Prostate gland (tissue), 2 donors: ENCODE measurements at regions of chr11 and their contacts with region 1.

Region 1: DNA sequence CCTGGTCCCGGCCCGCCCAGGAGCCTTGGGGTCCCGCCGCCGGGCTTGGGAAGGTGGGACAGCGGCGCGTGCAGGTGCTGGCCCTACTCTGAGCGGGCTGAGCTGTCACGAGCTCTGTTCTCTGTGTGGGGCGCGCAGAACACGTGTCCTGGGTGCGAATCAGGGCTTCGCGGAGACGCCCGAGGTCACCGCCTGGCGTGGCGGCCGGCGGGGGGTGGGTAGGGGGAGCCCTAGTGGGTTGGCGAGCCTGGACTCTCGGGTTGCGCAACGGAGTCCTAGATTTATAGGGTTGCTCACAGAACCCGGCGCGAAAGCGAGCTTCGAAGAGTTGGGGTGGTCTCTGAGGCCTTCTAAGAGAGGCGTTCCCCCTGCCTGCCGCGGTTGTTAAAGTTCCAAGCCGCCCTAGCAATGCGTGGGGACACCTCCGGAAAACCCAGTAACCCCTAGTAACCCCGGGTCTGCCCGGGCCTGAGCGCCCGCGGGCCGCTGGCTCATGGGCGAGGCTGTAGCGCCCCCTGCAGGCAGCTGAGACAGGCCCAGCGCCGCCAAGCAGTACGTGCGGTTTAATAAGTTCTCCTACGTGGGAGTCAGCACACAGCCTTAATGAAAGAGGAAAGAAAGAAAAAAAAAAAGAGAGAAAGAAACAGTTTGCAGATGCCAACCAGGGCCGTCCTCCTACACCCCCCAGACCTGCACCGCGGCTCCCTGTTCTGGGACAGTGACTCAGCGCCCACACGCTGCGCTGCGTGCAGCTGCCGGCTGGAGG is 2.8 kb downstream of the ADM start:
- DNase-seq: peak; percentile 75
- H3K4me3 ChIP-seq: peak overlapping the region; percentile 54 to 58
- H3K27ac ChIP-seq: peak overlapping the region; percentile 95 to 96
- H3K4me1 ChIP-seq: peaks cover 8% of the 10 kb centered on the region
- H3K27me3 ChIP-seq: no peaks in the 10 kb centered on the region
- CTCF ChIP-seq: peak; percentile 97 to 99 (median 98)
- POLR2A ChIP-seq: peak; percentile 50

Region 2: DNA sequence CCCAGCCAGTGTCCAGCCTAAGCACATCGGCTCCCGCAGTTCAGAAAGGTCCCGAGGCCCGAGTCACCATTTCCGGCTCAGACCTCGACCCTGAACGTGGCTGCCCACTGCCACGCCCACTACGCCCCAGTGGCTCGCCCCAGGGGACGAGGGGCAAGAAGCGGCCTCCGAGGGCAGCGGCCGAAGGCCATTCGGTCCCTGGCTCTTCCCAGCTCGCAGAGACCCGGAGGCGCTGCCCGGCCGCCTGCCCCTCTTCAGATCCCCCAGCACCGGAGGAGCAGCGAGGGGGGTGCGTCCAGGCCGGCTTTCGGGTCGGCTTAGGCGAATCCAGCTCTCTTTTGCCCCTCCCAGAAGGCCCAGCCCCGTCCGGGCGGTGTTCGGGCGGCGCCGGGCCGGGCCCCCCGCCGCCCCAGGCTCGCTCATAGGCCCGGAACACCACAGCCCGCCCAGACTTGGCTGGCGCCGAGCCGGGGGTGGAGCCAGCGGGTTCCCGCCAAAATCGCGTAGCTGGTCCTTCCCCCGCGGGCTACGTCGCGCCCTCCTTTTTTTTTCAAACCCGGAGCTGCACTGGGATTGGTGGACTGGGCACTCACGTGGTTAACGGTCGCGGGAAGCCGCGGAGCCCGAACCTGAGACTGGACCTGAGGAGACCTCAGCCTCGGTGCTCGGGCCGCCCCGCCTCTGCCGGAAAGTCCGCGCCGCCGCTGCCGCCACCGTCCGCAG is 734.4 kb before region 1 on chr11 and contains the start of gene WEE1:
- intact Hi-C with region 1: loop called (anchors 10 kb)
- DNase-seq: peak; percentile 98
- H3K4me3 ChIP-seq: peak within 1 kb of the TSS; percentile 77
- H3K27ac ChIP-seq: peak within 1 kb of the TSS; percentile 93 to 99
- H3K4me1 ChIP-seq: peaks cover 8% of the 10 kb centered on the region
- H3K27me3 ChIP-seq: no peaks in the 10 kb centered on the region
- CTCF ChIP-seq: no peak
- POLR2A ChIP-seq: peak; percentile 92
- total RNA-seq, gene WEE1: 31.0 to 33.1 TPM

Region 3: GRCh38 chr11:9861860-9862725 is 445.5 kb before region 1 on chr11:
- intact Hi-C with region 1: no loop called
- DNase-seq: peak; percentile 34
- H3K4me3 ChIP-seq: no peak overlapping the region
- H3K27ac ChIP-seq: no peak overlapping the region
- H3K4me1 ChIP-seq: peaks cover 4% of the 10 kb centered on the region
- H3K27me3 ChIP-seq: no peaks in the 10 kb centered on the region
- CTCF ChIP-seq: peak in 3 of 4 experiments; percentile 42 to 55 (median 51)
- POLR2A ChIP-seq: no peak

Region 4: GRCh38 chr11:9972989-9973388 is 334.6 kb before region 1 on chr11:
- intact Hi-C with region 1: loop called (anchors 10 kb)
- DNase-seq: peak; percentile 38
- H3K4me3 ChIP-seq: no peak overlapping the region
- H3K27ac ChIP-seq: no peak overlapping the region
- H3K4me1 ChIP-seq: no peaks in the 10 kb centered on the region
- H3K27me3 ChIP-seq: no peaks in the 10 kb centered on the region
- CTCF ChIP-seq: peak; percentile 23 to 86 (median 68)
- POLR2A ChIP-seq: no peak

Region 5: DNA sequence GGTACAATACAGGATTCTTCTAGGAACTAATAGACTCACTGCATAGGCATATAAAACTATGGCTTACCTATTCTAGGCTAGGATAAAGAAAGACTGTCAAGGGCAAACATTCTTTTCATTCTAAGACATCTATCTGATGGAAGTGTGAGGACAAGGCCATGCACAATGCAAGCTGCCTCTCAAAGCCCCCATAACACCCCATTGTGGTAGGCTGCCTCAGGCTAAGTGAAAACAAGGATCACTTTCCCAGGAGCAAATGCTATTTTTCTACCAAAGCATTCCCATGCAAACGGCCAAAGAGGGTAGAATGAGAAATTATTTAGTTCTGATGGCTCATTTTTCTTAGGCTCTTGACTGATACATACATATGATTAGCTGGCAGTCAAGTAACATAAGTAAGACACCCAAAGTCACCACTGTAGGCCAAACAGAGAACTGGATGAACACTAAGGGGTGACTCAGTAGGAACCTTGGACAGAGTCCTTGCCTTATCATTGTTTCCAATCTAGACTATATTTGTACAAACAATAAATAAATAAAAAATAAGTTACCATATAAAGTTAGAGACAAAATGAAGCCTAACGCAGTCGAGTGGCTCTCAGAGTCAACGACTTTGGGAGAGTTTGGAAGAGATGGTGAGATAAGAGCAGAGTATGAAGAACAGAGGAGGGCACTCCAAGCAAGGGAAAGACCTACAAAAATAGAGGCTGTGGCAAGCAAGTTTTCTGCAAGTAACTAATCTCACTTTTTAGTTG is 317.2 kb before region 1 on chr11:
- intact Hi-C with region 1: loop called (anchors 5 kb)
- DNase-seq: no peak
- H3K4me3 ChIP-seq: no peak overlapping the region
- H3K27ac ChIP-seq: no peak overlapping the region
- H3K4me1 ChIP-seq: no peaks in the 10 kb centered on the region
- H3K27me3 ChIP-seq: no peaks in the 10 kb centered on the region
- CTCF ChIP-seq: peak in 2 of 4 experiments; percentile 15 to 23
- POLR2A ChIP-seq: no peak

Region 6: GRCh38 chr11:10050561-10050960 is 257.1 kb before region 1 on chr11:
- intact Hi-C with region 1: no loop called
- DNase-seq: no peak
- H3K4me3 ChIP-seq: no peak overlapping the region
- H3K27ac ChIP-seq: no peak overlapping the region
- H3K4me1 ChIP-seq: no peaks in the 10 kb centered on the region
- H3K27me3 ChIP-seq: no peaks in the 10 kb centered on the region
- CTCF ChIP-seq: no peak
- POLR2A ChIP-seq: no peak

Region 7: GRCh38 chr11:10109826-10110225 is 197.8 kb before region 1 on chr11:
- intact Hi-C with region 1: loop called (anchors 5 kb)
- DNase-seq: no peak
- H3K4me3 ChIP-seq: no peak overlapping the region
- H3K27ac ChIP-seq: no peak overlapping the region
- H3K4me1 ChIP-seq: no peaks in the 10 kb centered on the region
- H3K27me3 ChIP-seq: no peaks in the 10 kb centered on the region
- CTCF ChIP-seq: no peak
- POLR2A ChIP-seq: no peak

Region 8: DNA sequence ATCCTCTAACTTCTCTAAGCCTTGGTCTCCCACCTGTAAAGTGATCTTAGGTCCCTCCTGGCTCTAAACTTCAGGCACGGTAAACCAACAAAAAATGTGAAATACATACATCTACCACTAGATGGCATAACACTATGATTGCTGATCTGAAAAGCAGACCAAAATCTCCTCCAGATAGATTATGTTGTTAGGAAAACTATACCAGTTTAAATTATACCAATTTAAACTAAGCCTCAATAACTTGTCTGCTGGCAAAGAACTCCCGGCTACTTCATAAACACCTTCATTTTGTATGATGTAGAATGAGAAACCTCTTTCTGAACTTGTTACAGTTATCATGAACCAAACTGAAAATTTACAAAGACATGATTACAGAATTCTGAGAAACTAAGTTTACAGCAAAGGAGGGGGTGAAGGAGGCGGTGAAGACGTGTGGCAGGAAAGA is 99.5 kb before region 1 on chr11:
- intact Hi-C with region 1: loop called (anchors 5 kb)
- DNase-seq: no peak
- H3K4me3 ChIP-seq: no peak overlapping the region
- H3K27ac ChIP-seq: no peak overlapping the region
- H3K4me1 ChIP-seq: no peaks in the 10 kb centered on the region
- H3K27me3 ChIP-seq: no peaks in the 10 kb centered on the region
- CTCF ChIP-seq: peak; percentile 57 to 87 (median 76)
- POLR2A ChIP-seq: no peak